PC-3 (cell line): ENCODE measurements at regions of chr1 and their contacts with region 1.

Region 1: GRCh38 chr1:88549536-88549935 is 134.5 kb upstream of the PKN2 start:
- DNase-seq: peak; percentile 43
- ATAC-seq: no peak
- H3K4me3 ChIP-seq: no peak overlapping the region
- H3K27ac ChIP-seq: no peak overlapping the region
- H3K4me1 ChIP-seq: no peaks in the 10 kb centered on the region
- H3K27me3 ChIP-seq: no peaks in the 10 kb centered on the region
- CTCF ChIP-seq: peak; percentile 64

Region 2: GRCh38 chr1:88180449-88181108 is 369.0 kb before region 1 on chr1:
- CTCF ChIA-PET with region 1: interaction called, 5 read pairs
- POLR2A ChIA-PET with region 1: no interaction called
- intact Hi-C with region 1: loop called (anchors 2 kb)
- DNase-seq: peak; percentile 85
- ATAC-seq: peak; percentile 98
- H3K4me3 ChIP-seq: no peak overlapping the region
- H3K27ac ChIP-seq: no peak overlapping the region
- H3K4me1 ChIP-seq: peaks cover 6% of the 10 kb centered on the region
- H3K27me3 ChIP-seq: no peaks in the 10 kb centered on the region
- CTCF ChIP-seq: peak; percentile 96

Region 3: DNA sequence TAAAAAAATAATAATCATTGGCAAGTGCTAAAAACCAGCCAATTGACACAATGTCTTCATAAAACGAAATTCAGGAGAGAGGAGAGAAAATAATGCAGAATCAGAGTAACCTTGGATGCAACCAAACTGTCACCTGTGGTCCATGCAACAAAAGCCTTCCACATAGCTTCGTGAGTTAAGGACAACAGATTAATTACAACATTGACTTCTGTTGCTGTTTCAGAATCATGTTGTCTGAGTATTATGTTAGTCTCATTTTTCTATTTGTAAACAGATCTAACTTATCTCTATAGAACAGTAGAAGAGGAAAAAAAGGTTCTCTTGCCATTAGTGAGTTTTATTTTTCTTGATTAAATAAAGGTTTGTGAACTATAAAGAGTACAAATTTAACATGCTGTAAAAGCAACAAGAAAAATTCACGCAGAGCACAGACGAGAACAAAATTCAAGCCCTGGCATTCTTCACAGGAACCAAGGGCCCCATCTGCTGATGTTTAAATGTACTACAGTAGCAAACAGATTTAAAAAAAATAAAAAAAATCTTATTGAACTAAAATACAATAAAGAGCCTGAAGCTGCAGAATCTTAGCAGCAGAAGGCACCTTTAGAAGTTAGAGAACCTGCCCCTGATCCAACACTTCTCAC is 246.6 kb before region 1 on chr1:
- CTCF ChIA-PET with region 1: no interaction called
- POLR2A ChIA-PET with region 1: no interaction called
- intact Hi-C with region 1: loop called (anchors 5 kb)
- DNase-seq: peak; percentile 51
- ATAC-seq: peak; percentile 62; the same call in 1 of the 2 replicates
- H3K4me3 ChIP-seq: no peak overlapping the region
- H3K27ac ChIP-seq: no peak overlapping the region
- H3K4me1 ChIP-seq: no peaks in the 10 kb centered on the region
- H3K27me3 ChIP-seq: no peaks in the 10 kb centered on the region
- CTCF ChIP-seq: peak; percentile 65

Region 4: GRCh38 chr1:88595355-88596002 is 45.9 kb after region 1 on chr1:
- CTCF ChIA-PET with region 1: no interaction called
- POLR2A ChIA-PET with region 1: no interaction called
- intact Hi-C with region 1: loop called (anchors 2 kb)
- DNase-seq: peak; percentile 74
- ATAC-seq: peak; percentile 40; the same call in 1 of the 2 replicates
- H3K4me3 ChIP-seq: no peak overlapping the region
- H3K27ac ChIP-seq: no peak overlapping the region
- H3K4me1 ChIP-seq: no peaks in the 10 kb centered on the region
- H3K27me3 ChIP-seq: no peaks in the 10 kb centered on the region
- CTCF ChIP-seq: peak; percentile 78

Region 5: GRCh38 chr1:88877382-88877825 is 327.9 kb after region 1 on chr1:
- CTCF ChIA-PET with region 1: no interaction called
- POLR2A ChIA-PET with region 1: no interaction called
- intact Hi-C with region 1: loop called (anchors 5 kb)
- DNase-seq: peak; percentile 62
- ATAC-seq: peak; percentile 48
- H3K4me3 ChIP-seq: no peak overlapping the region
- H3K27ac ChIP-seq: no peak overlapping the region
- H3K4me1 ChIP-seq: peaks cover 8% of the 10 kb centered on the region; the same call in 1 of the 2 replicates
- H3K27me3 ChIP-seq: no peaks in the 10 kb centered on the region
- CTCF ChIP-seq: peak; percentile 70